Activated naive CD4-positive, alpha-beta T cell treated with anti-CD3 and anti-CD28 coated beads, Interleukin-2, amount 10 ng/mL, durations not matched to agents 7 days and 5 days (primary cell): ENCODE measurements at regions of chr15 and their contacts with region 1.

Region 1: GRCh38 chr15:61834076-61834697 is 226.1 kb downstream of the VPS13C start:
- DNase-seq: peak; percentile 79
- H3K4me3 Mint-ChIP-seq: no peak overlapping the region
- H3K27ac Mint-ChIP-seq: no peak overlapping the region
- H3K4me1 Mint-ChIP-seq: peaks cover 3% of the 10 kb centered on the region
- H3K27me3 Mint-ChIP-seq: peaks cover 42% of the 10 kb centered on the region

Region 2: DNA sequence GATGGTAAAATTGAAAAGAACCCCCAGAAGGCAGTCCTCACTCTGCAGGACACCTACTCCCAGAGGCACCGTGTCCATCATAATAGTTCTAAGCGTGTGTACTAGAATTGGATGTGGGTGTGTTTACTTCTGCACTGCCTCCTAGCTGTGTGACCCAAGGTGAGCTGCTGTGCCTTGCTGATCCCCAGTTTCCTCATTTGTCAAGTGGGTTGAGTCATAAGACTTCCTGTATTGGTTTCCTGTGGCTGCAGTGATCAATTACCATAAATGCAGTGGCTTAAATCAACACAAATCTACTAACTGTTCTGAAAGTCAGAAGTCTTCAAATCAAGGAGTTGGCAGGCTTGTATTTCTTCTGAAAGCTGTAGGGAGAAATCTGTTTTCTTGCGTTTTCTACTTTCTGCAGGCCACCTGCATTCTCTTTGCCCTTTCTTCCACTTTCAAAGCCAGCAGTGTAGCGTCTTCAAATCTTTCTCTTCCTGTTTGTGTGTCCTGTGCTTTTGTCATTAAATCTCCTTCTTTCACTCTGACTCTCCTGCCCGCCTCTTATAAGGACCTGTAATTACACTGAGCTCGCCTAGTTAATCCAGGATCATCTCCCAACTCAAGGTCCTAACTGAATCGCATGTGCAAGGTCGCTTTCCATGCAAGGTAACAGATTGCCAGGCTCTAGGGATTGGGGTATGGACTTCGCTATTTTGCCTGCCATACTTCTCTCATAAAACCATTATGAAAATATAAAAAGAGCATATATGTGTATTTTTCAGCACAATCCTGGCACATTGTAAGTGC is 664.1 kb before region 1 on chr15:
- CTCF ChIA-PET with region 1: interaction called, 68 read pairs
- DNase-seq: peak; percentile 43
- H3K4me3 Mint-ChIP-seq: no peak overlapping the region
- H3K27ac Mint-ChIP-seq: peak overlapping the region; percentile 63
- H3K4me1 Mint-ChIP-seq: peaks cover 24% of the 10 kb centered on the region
- H3K27me3 Mint-ChIP-seq: peaks cover 19% of the 10 kb centered on the region

Region 3: DNA sequence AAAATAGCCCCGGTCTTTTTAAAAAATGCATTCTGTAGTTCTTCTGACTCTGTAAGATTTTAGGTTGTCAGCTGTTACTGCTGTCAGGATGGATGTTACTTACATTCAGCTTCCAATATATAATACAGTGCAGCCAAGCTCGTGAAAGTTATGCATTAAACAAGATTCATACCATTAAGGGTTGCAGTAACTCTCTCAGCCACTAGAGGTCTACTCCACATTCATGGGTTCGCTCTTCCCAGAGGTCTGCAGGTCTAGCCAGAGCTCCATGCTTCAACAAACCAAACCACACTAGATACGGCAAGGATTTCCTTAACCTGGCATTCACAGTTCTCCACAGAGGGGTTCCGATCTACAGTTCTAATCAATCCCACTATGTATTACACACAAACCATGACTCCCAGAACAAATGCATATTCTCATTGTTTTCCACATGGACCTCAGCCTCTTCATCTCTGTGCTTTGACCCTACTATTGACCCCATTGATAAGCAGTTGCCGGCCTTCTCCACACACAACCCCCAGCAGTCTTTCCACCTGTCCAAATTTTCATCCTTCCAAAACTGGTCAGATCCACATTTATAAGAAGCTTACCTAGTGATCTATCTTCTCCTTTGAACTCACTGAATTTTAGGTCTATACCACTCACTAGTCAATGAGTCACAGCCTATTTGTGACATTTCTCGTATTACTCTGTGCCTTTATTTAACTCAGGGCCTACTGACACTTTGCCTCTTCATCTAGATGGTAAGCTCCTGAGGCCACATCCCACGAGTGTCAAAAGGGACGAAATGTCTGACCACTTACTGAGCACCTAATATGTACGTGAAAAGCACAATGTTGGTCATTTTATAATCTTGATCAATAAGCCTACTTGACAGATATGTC is 638.8 kb before region 1 on chr15:
- CTCF ChIA-PET with region 1: interaction called, 17 read pairs
- DNase-seq: peak; percentile 24
- H3K4me3 Mint-ChIP-seq: no peak overlapping the region
- H3K27ac Mint-ChIP-seq: no peak overlapping the region
- H3K4me1 Mint-ChIP-seq: no peaks in the 10 kb centered on the region
- H3K27me3 Mint-ChIP-seq: peaks cover 7% of the 10 kb centered on the region

Region 4: GRCh38 chr15:62035256-62035908 is 201.2 kb after region 1 on chr15:
- CTCF ChIA-PET with region 1: no interaction called
- DNase-seq: no peak
- H3K4me3 Mint-ChIP-seq: no peak overlapping the region
- H3K27ac Mint-ChIP-seq: no peak overlapping the region
- H3K4me1 Mint-ChIP-seq: peaks cover 2% of the 10 kb centered on the region
- H3K27me3 Mint-ChIP-seq: no peaks in the 10 kb centered on the region